Left colon (tissue), 2 donors: ENCODE measurements at regions of chr2 and their contacts with region 1.

Region 1: DNA sequence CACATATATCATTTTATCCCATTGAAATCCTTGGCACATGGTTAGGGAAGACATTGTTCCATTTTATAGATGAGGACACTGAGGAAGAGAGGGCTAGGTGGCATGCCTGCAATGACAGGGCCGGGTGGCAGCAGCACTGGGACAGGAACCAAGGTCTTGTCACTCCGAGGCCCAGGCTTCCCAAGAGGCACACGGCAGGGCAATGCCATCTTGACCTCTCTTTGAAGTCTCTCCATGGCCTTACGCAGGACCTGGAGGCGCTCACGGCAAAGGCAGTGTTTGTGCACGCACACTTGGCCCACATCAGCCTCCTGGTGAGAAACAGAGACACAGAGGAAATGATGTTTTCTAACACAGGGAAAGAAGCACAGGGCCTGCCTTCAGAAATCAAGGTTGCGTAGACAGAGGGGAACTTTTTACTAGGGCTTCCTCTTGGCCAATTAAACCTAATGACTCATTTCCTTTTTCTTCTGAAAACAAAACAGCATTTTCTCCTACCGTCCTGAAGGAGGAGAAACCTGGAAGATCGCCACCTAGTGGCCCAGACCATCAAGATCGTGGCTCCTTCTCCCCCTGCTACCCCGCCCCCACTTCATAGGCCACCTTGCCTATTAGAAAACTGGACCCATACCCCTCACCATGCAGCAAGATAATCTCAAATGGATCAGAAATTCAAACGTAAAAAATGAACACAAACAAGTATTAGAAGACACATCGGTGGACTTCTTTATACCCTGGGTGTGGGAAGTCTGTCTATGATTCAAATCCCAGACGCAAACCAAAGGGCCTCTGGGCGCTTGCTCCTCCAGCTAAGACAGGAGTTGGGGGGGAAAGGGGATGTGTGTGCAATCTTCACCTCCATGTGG is 74.6 kb upstream of the SP3 start:
- DNase-seq: peak; percentile 83 to 95
- ATAC-seq: peak; percentile 94

Region 2: DNA sequence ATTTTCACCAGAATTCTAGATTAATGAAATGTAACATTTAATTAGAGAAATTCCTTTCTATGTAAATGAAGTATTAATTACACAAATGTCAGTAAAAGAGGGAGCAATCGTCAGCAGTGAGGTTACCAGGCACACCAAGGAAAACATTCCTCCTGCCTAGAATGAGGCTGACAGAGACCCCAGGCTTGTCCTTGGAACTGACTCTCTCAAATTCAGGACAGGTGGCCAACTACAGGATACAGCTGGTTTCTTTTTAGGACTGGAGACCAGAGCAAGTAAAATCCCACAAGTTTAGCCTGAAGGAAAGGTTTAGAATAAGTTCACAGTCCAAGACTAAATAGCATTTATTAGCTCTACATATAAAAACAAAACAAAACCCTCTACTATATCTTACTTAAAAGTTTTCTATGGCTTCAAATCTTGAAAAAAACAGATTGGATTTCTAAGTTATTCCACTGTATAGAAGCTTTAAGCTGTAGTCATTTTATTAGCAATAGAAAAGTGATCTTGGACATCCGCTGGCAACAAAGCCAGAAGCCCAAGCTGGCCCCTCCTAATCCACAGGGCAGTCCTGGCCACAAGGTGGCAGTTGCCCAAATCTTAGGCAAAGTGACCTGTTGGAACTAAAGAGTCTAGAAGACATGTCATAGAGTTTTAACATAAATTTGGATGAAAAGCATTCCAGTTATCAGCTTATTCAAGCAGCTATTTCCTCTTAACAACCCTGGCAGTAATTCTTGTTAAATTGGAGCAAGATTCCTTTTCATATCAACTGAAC is 155.6 kb before region 1 on chr2:
- intact Hi-C with region 1: loop called in 1 of 2 experiments (anchors 10 kb)
- DNase-seq: peak in 1 of 2 donors; percentile 67
- ATAC-seq: peak; percentile 79